H1 (cell line): ENCODE measurements at regions of chr1 and their contacts with region 1.

Region 1: GRCh38 chr1:33616773-33617172 is 144.3 kb downstream of the ZSCAN20 start:
- DNase-seq: no peak
- H3K4me3 ChIP-seq: no peak overlapping the region
- H3K27ac ChIP-seq: no peak overlapping the region
- H3K4me1 ChIP-seq: no peaks in the 10 kb centered on the region
- H3K27me3 ChIP-seq: no peaks in the 10 kb centered on the region
- CTCF ChIP-seq: no peak
- EP300 ChIP-seq: no peak
- POLR2A ChIP-seq: no peak
- RAD21 ChIP-seq: no peak

Region 2: GRCh38 chr1:33599516-33600115 is 17.2 kb before region 1 on chr1:
- CTCF ChIA-PET with region 1: interaction called, 12 read pairs
- POLR2A ChIA-PET with region 1: no interaction called
- DNase-seq: no peak
- H3K4me3 ChIP-seq: no peak overlapping the region
- H3K27ac ChIP-seq: no peak overlapping the region
- H3K4me1 ChIP-seq: no peaks in the 10 kb centered on the region
- H3K27me3 ChIP-seq: no peaks in the 10 kb centered on the region; a peak in 1 of 7 replicates
- CTCF ChIP-seq: no peak
- EP300 ChIP-seq: no peak
- POLR2A ChIP-seq: no peak
- RAD21 ChIP-seq: no peak

Region 3: GRCh38 chr1:33654267-33654834 is 37.6 kb after region 1 on chr1:
- CTCF ChIA-PET with region 1: no interaction called
- POLR2A ChIA-PET with region 1: no interaction called
- DNase-seq: no peak
- H3K4me3 ChIP-seq: no peak overlapping the region
- H3K27ac ChIP-seq: no peak overlapping the region
- H3K4me1 ChIP-seq: no peaks in the 10 kb centered on the region
- H3K27me3 ChIP-seq: no peaks in the 10 kb centered on the region
- CTCF ChIP-seq: peak; percentile 58 to 76 (median 71)
- EP300 ChIP-seq: no peak
- POLR2A ChIP-seq: no peak
- RAD21 ChIP-seq: peak; percentile 56 to 69